ENCODE measurements at regions of chr7 and their contacts with region 1.

Region 1: DNA sequence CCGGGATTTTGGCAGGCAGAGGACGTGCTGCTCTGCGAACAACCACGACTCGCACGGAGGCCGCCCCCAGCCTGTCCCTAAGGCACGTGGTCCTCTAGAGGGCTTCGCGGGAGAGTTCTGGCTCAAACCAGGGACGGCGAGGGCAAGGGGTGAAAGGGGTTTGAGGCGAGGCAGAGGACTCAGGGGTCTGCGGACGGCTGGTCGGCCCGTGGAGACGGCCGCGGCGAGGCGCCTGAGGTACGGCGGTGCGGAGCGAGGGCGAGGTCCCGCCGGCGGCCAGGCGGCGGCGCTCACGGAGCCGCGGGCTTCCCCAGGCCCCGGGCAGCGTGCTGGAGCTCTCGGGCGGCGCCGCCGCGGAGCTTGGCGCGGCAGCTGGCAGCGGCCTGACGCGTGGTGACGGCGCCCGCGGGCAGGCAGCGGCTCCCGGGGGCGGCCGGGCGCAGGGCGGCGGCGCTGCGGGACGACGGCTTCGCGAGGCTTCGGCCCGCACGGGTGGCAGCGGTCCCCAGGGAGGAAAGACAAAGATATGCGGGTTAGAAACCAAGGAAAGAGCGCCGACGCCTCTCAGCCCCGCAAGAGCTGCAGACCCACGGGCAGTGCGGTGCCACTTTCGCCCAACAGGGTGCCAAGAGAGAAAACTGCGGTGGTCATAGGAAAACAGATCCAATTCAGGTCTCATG is 44.8 kb downstream of the ZNF800 start:
- DNase-seq: peak; percentile 55 to 80 (median 73)
- ATAC-seq: peak; percentile 99
- H3K4me3 ChIP-seq: peak overlapping the region; percentile 46
- H3K4me3 Mint-ChIP-seq: peak overlapping the region; percentile 52 to 80 (median 65)
- H3K27ac ChIP-seq: no peak overlapping the region
- H3K27ac Mint-ChIP-seq: peak overlapping the region in 2 of 9 donors; percentile 48 to 68
- H3K4me1 ChIP-seq: peaks cover 3% of the 10 kb centered on the region in 2 donors
- H3K4me1 Mint-ChIP-seq: peaks cover 6 to 33% (median 22%) of the 10 kb centered on the region in 7 donors
- H3K27me3 ChIP-seq: no peaks in the 10 kb centered on the region
- H3K27me3 Mint-ChIP-seq: peaks cover 0 to 28% (median 0%) of the 10 kb centered on the region in 5 donors

Region 2: DNA sequence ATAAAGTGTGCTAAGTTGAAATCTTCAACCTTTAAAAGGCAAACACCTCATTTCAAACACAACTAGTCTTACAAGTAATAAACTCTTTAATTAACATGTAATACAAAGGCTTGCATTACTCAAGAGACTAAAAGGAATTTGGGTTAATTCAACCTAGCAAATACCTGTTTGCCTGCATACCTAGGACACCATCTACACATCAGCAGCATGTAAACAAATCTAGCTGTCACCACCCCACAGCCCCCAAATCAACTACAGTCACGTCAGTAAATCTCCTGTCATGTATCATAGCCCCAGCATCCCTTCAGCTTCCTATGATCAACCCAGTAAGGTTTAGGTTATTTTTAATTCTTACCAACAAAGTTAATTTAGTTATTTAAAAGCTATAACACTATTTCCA is 11.3 kb after region 1 on chr7:
- CTCF ChIA-PET with region 1: interaction called, 3 read pairs
- POLR2A ChIA-PET with region 1: no interaction called
- intact Hi-C with region 1: loop called in 1 of 2 experiments (anchors 1 kb)
- DNase-seq: no peak
- ATAC-seq: no peak
- H3K4me3 ChIP-seq: no peak overlapping the region
- H3K4me3 Mint-ChIP-seq: no peak overlapping the region
- H3K27ac ChIP-seq: no peak overlapping the region
- H3K27ac Mint-ChIP-seq: peak overlapping the region in 4 of 9 donors; percentile 9 to 53 (median 52)
- H3K4me1 ChIP-seq: no peaks in the 10 kb centered on the region
- H3K4me1 Mint-ChIP-seq: peaks cover 0 to 36% (median 22%) of the 10 kb centered on the region in 7 donors
- H3K27me3 ChIP-seq: no peaks in the 10 kb centered on the region
- H3K27me3 Mint-ChIP-seq: no peaks in the 10 kb centered on the region

Region 3: DNA sequence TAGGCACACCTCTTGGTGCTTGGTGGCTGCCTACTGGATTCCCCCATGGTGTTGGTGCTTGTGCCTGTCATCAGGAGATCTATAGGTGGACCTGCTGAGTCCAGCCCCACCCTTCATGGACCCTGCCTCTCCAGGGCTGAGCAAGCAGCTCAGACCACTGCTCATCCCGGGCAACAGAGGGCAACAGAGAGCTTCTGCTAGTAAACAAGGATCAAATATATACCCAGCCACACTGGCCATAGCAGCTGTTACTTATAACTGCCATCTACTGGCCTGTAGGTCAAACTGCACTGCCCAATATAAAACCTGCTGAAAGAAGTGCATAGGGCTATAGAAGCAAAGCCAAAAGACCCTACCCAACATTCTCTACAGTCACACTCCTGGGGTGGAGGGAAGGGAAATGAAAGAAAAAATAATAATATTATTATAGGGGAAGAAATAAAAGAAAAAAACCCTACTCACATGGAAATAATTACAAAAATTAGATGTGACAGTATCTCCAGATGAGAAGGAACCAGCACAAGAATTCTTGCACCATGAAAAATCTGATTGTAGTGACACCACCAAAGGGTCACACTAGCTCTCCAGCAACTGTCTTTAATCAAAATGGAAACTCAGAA is 99.7 kb after region 1 on chr7:
- CTCF ChIA-PET with region 1: interaction called, 45 read pairs
- POLR2A ChIA-PET with region 1: interaction called, 8 read pairs
- intact Hi-C with region 1: loop called (anchors 1 kb)
- DNase-seq: peak in 8 of 9 donors; percentile 47 to 66 (median 56)
- ATAC-seq: peak; percentile 100
- H3K4me3 ChIP-seq: no peak overlapping the region
- H3K4me3 Mint-ChIP-seq: peak overlapping the region in 1 of 10 donors; percentile 43
- H3K27ac ChIP-seq: no peak overlapping the region
- H3K27ac Mint-ChIP-seq: peak overlapping the region in 1 of 9 donors; percentile 40
- H3K4me1 ChIP-seq: peaks cover 0 to 11% of the 10 kb centered on the region in 2 donors
- H3K4me1 Mint-ChIP-seq: peaks cover 5 to 33% (median 28%) of the 10 kb centered on the region in 7 donors
- H3K27me3 ChIP-seq: no peaks in the 10 kb centered on the region
- H3K27me3 Mint-ChIP-seq: peaks cover 4 to 51% (median 14%) of the 10 kb centered on the region in 5 donors

Region 4: GRCh38 chr7:127578711-127579275 is 231.1 kb after region 1 on chr7:
- CTCF ChIA-PET with region 1: interaction called, 10 read pairs
- POLR2A ChIA-PET with region 1: no interaction called
- intact Hi-C with region 1: no loop called
- DNase-seq: no peak
- ATAC-seq: no peak
- H3K4me3 ChIP-seq: no peak overlapping the region
- H3K4me3 Mint-ChIP-seq: no peak overlapping the region
- H3K27ac ChIP-seq: no peak overlapping the region
- H3K27ac Mint-ChIP-seq: peak overlapping the region in 2 of 9 donors; percentile 8 to 34
- H3K4me1 ChIP-seq: peaks cover 20 to 24% of the 10 kb centered on the region in 2 donors
- H3K4me1 Mint-ChIP-seq: peaks cover 27 to 53% (median 47%) of the 10 kb centered on the region in 7 donors
- H3K27me3 ChIP-seq: no peaks in the 10 kb centered on the region
- H3K27me3 Mint-ChIP-seq: no peaks in the 10 kb centered on the region

Region 5: DNA sequence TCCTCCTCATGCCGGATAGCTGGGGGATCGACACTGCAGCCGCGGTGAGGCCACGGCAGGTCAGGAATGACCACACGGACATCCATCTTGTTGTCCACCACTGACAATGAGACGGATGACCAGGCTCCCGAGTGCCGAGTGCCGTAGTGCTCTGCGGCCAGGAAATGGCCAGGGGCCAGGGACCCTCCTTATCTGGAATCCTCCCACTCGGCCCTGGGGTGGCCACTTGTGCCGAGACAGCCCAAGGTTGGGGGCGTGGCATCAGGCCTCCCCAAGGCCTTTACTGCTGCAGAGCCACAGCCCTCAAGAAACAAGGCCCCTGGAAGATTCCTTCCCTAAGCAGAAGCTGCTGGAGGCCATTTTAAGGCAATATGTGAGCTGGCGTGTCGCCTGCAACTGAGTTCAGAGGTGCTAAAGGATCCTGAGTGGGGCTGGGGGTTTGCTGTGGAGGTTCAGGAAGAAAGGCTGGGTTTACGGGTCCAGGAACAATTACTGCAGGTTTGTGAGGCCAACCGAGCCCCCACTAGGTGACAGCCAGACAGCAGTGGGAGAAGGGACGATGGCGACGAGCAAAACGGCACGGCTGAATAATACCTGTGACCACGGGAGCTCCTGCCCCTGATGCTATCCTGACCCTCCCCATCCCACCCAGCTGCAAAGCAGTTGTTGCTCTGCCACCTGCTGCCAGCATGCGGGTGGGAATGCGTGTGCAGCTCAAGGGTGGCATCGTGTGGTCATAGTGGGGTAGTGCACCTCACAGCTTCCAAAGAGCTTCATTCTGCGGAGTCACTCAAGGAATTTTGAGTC is 861.7 kb after region 1 on chr7:
- CTCF ChIA-PET with region 1: no interaction called
- POLR2A ChIA-PET with region 1: no interaction called
- intact Hi-C with region 1: loop called in 1 of 2 experiments (anchors 2 kb)
- DNase-seq: peak; percentile 44 to 73 (median 64)
- ATAC-seq: peak; percentile 94
- H3K4me3 ChIP-seq: no peak overlapping the region
- H3K4me3 Mint-ChIP-seq: no peak overlapping the region
- H3K27ac ChIP-seq: no peak overlapping the region
- H3K27ac Mint-ChIP-seq: no peak overlapping the region
- H3K4me1 ChIP-seq: no peaks in the 10 kb centered on the region
- H3K4me1 Mint-ChIP-seq: peaks cover 0 to 2% (median 0%) of the 10 kb centered on the region in 7 donors
- H3K27me3 ChIP-seq: no peaks in the 10 kb centered on the region
- H3K27me3 Mint-ChIP-seq: peaks cover 0 to 24% (median 19%) of the 10 kb centered on the region in 5 donors

Region 6: DNA sequence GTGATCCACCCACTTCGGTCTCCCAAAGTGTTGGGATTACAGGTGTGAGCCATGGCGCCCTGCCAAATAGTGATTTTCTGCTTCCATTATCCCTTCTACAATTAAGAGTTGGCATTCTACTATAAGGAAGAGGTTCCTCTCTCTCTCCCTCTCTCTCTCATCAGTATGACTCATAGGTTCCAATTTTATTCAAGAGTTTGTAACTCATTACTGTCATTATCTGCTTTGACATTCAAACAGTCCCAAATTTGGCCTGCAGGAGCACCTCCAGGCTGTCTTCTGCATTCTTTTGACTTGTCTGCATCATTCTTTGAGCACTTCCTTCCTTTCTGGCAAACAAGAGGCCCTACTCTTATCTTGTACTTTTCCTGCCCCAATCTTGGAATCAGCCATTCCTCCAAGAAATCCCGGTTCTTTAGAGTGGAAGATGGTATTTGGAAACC is 1358.2 kb after region 1 on chr7:
- CTCF ChIA-PET with region 1: no interaction called
- POLR2A ChIA-PET with region 1: no interaction called
- intact Hi-C with region 1: no loop called
- DNase-seq: no peak
- ATAC-seq: no peak
- H3K4me3 ChIP-seq: no peak overlapping the region
- H3K4me3 Mint-ChIP-seq: no peak overlapping the region
- H3K27ac ChIP-seq: no peak overlapping the region
- H3K27ac Mint-ChIP-seq: no peak overlapping the region
- H3K4me1 ChIP-seq: no peaks in the 10 kb centered on the region
- H3K4me1 Mint-ChIP-seq: peaks cover 0 to 2% (median 0%) of the 10 kb centered on the region in 7 donors
- H3K27me3 ChIP-seq: no peaks in the 10 kb centered on the region
- H3K27me3 Mint-ChIP-seq: peaks cover under 1 to 38% (median 7%) of the 10 kb centered on the region in 5 donors

Measured in naive thymus-derived CD4-positive, alpha-beta T cell (primary cell).